ENCODE measurements at regions of chr15 and their contacts with region 1.

Region 1: GRCh38 chr15:38072348-38073177 is 138.1 kb downstream of the TMCO5A start:
- ATAC-seq: peak; percentile 50 to 93 (median 88)
- H3K4me3 ChIP-seq: peak overlapping the region; percentile 17 to 52 (median 39)
- H3K27ac ChIP-seq: peak overlapping the region; percentile 79 to 92
- H3K4me1 ChIP-seq: peaks cover 37 to 47% of the 10 kb centered on the region in 2 donors

Region 2: DNA sequence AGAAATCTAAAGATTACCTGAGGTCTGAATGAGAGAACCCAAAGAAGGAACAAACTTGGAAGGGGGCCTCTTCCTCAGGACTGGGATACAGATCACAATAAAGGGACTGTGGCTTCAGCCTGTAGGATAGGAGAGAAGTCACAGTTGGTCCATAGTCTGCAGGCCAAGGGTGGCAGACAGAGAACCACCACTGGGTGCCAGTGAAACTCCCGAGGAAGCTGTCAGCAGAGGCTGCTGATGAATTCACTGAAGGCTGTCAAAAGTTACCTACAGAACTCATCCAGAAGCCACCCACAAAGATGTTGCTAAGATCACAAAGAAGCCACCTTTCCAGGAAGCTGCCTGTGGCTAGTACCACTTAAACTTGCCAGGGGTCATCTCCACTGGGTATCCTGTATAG is 59.7 kb before region 1 on chr15:
- in situ Hi-C with region 1: loop called in 1 of 9 experiments (anchors 10 kb)
- ATAC-seq: no peak
- H3K4me3 ChIP-seq: no peak overlapping the region
- H3K27ac ChIP-seq: no peak overlapping the region
- H3K4me1 ChIP-seq: no peaks in the 10 kb centered on the region

Region 3: DNA sequence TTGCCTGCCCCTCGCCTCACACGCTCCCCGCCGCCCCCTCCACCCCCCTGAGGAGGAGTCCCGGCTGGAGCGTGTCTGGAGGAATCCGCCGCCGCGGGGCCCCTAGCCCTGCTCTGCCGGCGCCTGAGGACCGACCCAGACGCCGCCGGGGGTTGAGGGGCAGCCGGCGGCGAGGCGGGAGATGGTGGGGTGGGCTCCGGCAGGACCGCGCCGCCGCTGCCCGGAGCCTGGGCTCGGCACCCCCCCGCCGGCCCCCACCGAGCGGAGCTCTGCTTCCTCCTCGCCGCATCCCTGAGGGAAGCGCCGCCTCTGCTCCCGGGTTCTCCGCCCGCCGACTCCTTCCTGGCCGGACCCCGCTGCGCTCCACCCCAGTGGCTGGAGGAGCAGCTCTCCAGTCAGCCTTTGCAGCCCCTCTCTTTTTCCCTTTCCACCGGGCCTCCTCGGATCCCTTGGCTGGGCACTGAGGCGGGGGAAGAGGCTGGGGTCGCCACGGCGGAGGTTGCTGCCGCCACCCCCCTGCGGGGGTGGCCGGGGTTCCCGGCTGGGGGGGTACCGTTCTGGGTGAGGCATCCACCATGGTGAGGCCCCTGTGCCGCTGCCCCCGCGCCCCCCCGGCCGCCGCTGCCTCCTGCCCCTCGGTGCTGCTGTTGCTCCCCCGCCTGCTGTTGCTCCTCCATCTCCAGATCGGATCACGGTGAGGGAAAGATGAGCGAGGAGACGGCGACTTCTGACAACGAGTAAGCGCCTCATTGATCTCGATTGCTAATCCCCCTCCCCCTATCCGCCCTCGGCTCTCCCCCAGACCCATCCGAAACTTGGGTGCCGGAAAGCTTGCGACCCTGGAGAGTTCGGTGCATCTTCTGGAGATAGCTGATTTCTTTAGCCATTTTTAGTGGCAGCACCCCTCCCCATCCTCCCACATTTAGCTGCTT is 180.2 kb after region 1 on chr15 and contains the start of gene SPRED1:
- in situ Hi-C with region 1: loop called in 1 of 9 experiments (anchors 25 kb)
- ATAC-seq: peak; percentile 32 to 47 (median 42)
- H3K4me3 ChIP-seq: peak within 1 kb of the TSS; percentile 81 to 99 (median 90)
- H3K27ac ChIP-seq: peak within 1 kb of the TSS; percentile 94
- H3K4me1 ChIP-seq: peaks cover 3 to 8% of the 10 kb centered on the region in 2 donors
- total RNA-seq, gene SPRED1: 10.1 to 46.0 (median 17.6) TPM